ENCODE measurements at regions of chr6 and their contacts with region 1.

Region 1: DNA sequence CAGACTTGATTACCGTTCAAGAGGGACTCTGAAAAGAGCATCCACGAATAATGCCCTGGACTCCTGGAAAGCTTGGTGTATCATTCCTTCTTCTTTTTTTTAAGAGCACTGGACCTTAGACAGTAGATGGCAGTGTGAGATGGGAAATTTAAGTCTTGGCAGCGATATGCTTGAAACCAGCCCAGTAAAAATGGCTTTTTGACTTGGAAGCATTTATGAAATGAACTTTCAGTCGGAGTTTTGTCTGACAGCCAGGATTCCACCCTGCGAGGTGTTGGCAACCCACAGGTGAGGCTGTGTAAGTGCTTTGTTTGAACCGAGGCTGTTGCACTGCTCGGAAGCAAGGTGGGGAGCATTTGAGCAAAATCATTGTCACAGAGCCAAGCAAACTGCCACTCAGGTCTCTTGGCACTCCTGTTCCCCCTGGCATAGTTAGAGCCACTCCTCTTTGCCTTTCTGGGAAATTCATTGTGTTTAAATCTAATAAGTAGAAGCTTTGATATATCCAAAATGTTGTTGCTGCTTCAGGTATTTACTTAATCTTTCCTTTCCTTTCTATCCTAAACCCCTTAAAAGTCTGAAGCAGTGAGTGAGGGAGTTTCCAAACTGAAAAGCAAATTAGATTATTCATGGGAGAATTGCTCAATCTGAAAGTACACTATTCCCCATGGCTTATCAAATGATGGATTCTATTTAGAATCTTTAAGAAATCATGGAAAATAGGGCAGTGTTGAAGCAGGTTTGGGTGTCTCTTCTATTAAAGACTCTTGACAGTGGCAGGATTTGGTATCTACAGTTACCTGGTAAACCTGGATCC is 272.8 kb upstream of the SLC35B3 start:
- DNase-seq: peak; percentile 75
- H3K4me3 Mint-ChIP-seq: peak overlapping the region; percentile 63
- H3K27ac Mint-ChIP-seq: peak overlapping the region; percentile 47
- H3K4me1 Mint-ChIP-seq: peaks cover 9% of the 10 kb centered on the region
- H3K27me3 Mint-ChIP-seq: no peaks in the 10 kb centered on the region
- CTCF ChIP-seq: peak; percentile 48

Region 2: GRCh38 chr6:8131256-8131897 is 576.8 kb before region 1 on chr6:
- CTCF ChIA-PET with region 1: no interaction called
- POLR2A ChIA-PET with region 1: no interaction called
- intact Hi-C with region 1: loop called (anchors 1 kb)
- DNase-seq: peak; percentile 82
- H3K4me3 Mint-ChIP-seq: no peak overlapping the region
- H3K27ac Mint-ChIP-seq: no peak overlapping the region
- H3K4me1 Mint-ChIP-seq: peaks cover 20% of the 10 kb centered on the region
- H3K27me3 Mint-ChIP-seq: no peaks in the 10 kb centered on the region
- CTCF ChIP-seq: peak; percentile 80

Region 3: DNA sequence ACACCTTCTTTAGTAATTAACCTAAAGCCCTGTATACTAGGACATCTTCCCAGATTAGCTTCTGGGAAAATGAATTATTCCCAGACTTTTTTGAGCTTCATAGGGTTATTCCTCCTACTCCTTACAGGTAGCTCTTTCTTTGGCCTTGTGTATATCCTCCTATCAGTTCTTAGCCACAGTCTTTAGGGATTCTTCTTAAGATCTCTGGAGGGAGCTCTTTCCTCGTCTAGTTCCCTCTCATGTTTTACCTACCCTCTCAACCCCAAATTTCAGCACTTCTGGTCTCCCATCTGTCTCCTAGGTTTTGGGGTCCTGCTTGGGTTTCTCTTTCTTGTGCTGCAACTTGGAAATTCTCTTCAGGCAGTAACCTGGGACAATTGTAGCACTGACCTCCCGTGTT is 226.4 kb before region 1 on chr6:
- CTCF ChIA-PET with region 1: no interaction called
- POLR2A ChIA-PET with region 1: no interaction called
- intact Hi-C with region 1: no loop called
- DNase-seq: no peak
- H3K4me3 Mint-ChIP-seq: no peak overlapping the region
- H3K27ac Mint-ChIP-seq: no peak overlapping the region
- H3K4me1 Mint-ChIP-seq: peaks cover 5% of the 10 kb centered on the region
- H3K27me3 Mint-ChIP-seq: no peaks in the 10 kb centered on the region
- CTCF ChIP-seq: no peak

Region 4: GRCh38 chr6:8539446-8539845 is 168.7 kb before region 1 on chr6:
- CTCF ChIA-PET with region 1: interaction called, 5 read pairs
- POLR2A ChIA-PET with region 1: no interaction called
- intact Hi-C with region 1: loop called (anchors 1 kb)
- DNase-seq: peak; percentile 55
- H3K4me3 Mint-ChIP-seq: no peak overlapping the region
- H3K27ac Mint-ChIP-seq: peak overlapping the region; percentile 13
- H3K4me1 Mint-ChIP-seq: peaks cover 9% of the 10 kb centered on the region
- H3K27me3 Mint-ChIP-seq: no peaks in the 10 kb centered on the region
- CTCF ChIP-seq: peak; percentile 54

Region 5: GRCh38 chr6:8888468-8888867 is 180.3 kb after region 1 on chr6:
- CTCF ChIA-PET with region 1: interaction called, 4 read pairs
- POLR2A ChIA-PET with region 1: interaction called, 3 read pairs
- intact Hi-C with region 1: loop called (anchors 1 kb)
- DNase-seq: peak; percentile 30
- H3K4me3 Mint-ChIP-seq: no peak overlapping the region
- H3K27ac Mint-ChIP-seq: no peak overlapping the region
- H3K4me1 Mint-ChIP-seq: no peaks in the 10 kb centered on the region
- H3K27me3 Mint-ChIP-seq: no peaks in the 10 kb centered on the region
- CTCF ChIP-seq: peak; percentile 32

Region 6: DNA sequence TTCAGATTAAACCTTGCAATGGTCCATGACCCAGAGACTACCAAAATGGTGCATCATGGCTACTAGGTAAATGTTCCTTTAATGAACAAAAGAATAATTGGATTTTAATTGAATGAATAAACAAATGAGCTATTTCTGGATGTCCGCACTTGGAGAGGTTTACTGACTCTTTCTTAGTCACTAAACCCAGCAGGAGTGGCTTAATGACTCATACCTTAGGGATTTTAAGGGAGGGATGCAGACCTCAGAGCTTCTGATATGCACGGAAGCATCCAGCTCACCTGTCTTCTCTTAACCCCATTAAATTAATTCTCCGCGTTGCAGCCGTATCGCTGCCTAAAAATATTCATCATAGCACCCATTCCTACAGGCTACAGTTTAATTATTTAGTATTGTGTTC is 697.2 kb after region 1 on chr6:
- CTCF ChIA-PET with region 1: no interaction called
- POLR2A ChIA-PET with region 1: no interaction called
- intact Hi-C with region 1: loop called (anchors 5 kb)
- DNase-seq: peak; percentile 79
- H3K4me3 Mint-ChIP-seq: no peak overlapping the region
- H3K27ac Mint-ChIP-seq: no peak overlapping the region
- H3K4me1 Mint-ChIP-seq: peaks cover 17% of the 10 kb centered on the region
- H3K27me3 Mint-ChIP-seq: no peaks in the 10 kb centered on the region
- CTCF ChIP-seq: no peak

Region 7: GRCh38 chr6:9540534-9541126 is 832.5 kb after region 1 on chr6:
- CTCF ChIA-PET with region 1: interaction called, 4 read pairs
- POLR2A ChIA-PET with region 1: no interaction called
- intact Hi-C with region 1: loop called (anchors 5 kb)
- DNase-seq: peak; percentile 76
- H3K4me3 Mint-ChIP-seq: no peak overlapping the region
- H3K27ac Mint-ChIP-seq: no peak overlapping the region
- H3K4me1 Mint-ChIP-seq: no peaks in the 10 kb centered on the region
- H3K27me3 Mint-ChIP-seq: no peaks in the 10 kb centered on the region
- CTCF ChIP-seq: peak; percentile 59

Region 8: DNA sequence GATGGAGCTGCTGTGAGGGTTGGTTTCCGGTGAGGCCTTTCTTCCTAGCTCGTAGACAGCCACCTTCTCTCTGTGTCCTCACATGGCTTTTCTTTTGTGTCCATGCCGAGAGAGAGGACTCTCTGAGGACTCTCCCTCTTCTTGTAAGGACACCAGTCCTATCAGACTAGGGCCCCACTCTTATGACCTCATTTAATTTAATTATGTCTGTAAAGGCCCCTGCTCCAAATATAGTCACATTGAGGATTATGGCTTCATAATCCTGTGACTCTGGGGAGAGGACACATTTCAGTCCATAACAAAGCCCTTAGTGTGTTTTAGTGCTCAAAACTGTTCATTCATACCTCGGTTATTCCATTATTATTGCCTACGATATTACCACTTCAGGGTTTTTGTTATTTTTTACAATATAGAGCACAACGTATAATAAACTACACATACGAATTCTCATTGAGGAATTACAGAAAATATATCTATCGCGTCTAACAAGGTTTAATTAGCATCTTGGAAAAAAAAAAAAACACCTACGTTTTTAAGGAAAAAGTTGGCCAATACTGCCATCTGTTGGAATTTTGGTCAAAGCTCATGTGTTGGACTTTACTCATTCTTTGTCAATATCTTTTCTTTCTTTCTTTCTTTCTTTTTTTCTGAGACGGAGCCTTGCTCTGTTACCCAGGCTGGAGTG is 1726.7 kb after region 1 on chr6:
- CTCF ChIA-PET with region 1: interaction called, 24 read pairs
- POLR2A ChIA-PET with region 1: interaction called, 3 read pairs
- intact Hi-C with region 1: loop called (anchors 1 kb)
- DNase-seq: peak; percentile 71
- H3K4me3 Mint-ChIP-seq: peak overlapping the region; percentile 61
- H3K27ac Mint-ChIP-seq: peak overlapping the region; percentile 91
- H3K4me1 Mint-ChIP-seq: peaks cover 32% of the 10 kb centered on the region
- H3K27me3 Mint-ChIP-seq: no peaks in the 10 kb centered on the region
- CTCF ChIP-seq: peak; percentile 55